A673 (cell line): ENCODE measurements at regions of chr5 and their contacts with region 1.

Region 1: GRCh38 chr5:43432473-43433365 is 20.5 kb upstream of the CCL28 start:
- DNase-seq: peak; percentile 46
- H3K4me3 ChIP-seq: no peak overlapping the region
- H3K27ac ChIP-seq: no peak overlapping the region
- H3K4me1 ChIP-seq: peaks cover 7% of the 10 kb centered on the region
- H3K27me3 ChIP-seq: no peaks in the 10 kb centered on the region
- CTCF ChIP-seq: no peak

Region 2: DNA sequence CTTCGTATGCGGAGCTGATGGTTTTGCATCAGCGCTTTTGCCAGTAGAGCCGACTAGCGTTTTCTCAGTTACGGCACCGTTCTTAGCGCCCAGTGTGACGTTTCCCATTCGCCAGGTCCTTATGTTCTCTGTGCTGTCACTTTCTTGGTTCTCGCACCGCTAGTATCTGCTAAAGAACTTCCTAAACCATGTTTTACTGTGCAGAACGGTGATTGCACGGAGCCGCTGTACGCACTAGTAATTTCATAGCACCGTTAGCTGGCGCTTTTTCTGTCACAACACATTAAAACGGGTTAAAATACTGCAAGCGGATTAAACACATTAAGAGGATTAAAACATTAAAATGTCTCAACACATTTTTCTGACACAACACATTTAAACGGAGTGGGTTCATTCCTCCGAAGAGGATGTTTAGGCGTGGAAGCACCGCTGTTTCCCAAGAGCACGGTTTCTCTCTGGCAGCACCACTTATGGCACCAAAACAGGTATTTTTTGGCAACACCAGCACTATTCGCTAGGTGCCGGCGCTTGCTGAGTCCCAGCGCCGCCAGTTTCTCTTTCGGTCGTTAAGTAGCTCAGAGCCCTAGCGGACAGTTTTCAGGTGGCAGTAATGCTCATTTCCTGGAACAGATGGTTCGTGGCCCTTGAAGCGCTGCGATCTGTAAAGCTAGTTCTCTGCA is 413.0 kb before region 1 on chr5:
- CTCF ChIA-PET with region 1: interaction called, 12 read pairs
- POLR2A ChIA-PET with region 1: no interaction called
- intact Hi-C with region 1: no loop called
- DNase-seq: peak; percentile 89
- H3K4me3 ChIP-seq: peak overlapping the region; percentile 81
- H3K27ac ChIP-seq: peak overlapping the region; percentile 31
- H3K4me1 ChIP-seq: peaks cover 16% of the 10 kb centered on the region
- H3K27me3 ChIP-seq: no peaks in the 10 kb centered on the region
- CTCF ChIP-seq: peak; percentile 52